Stomach (tissue), 19 donors: ENCODE measurements at regions of chr14 and their contacts with region 1.

Region 1: GRCh38 chr14:69242311-69243224 is 17.4 kb upstream of the GALNT16 start:
- DNase-seq: peak; percentile 69 to 85
- H3K4me3 ChIP-seq: no peak overlapping the region
- H3K27ac ChIP-seq: no peak overlapping the region
- H3K4me1 ChIP-seq: peaks cover 0 to 14% (median 6%) of the 10 kb centered on the region in 4 donors
- H3K27me3 ChIP-seq: no peaks in the 10 kb centered on the region
- CTCF ChIP-seq: peak in 5 of 7 experiments; percentile 56 to 81 (median 73)
- EP300 ChIP-seq: no peak
- POLR2A ChIP-seq: no peak

Region 2: GRCh38 chr14:69038455-69039287 is 203.9 kb before region 1 on chr14:
- intact Hi-C with region 1: no loop called
- DNase-seq: peak in 1 of 2 donors; percentile 69
- H3K4me3 ChIP-seq: no peak overlapping the region
- H3K27ac ChIP-seq: peak overlapping the region in 4 of 5 donors; percentile 29 to 71 (median 54)
- H3K4me1 ChIP-seq: peaks cover 14 to 35% (median 22%) of the 10 kb centered on the region in 4 donors
- H3K27me3 ChIP-seq: no peaks in the 10 kb centered on the region
- CTCF ChIP-seq: no peak
- EP300 ChIP-seq: no peak
- POLR2A ChIP-seq: no peak

Region 3: GRCh38 chr14:69204753-69205152 is 37.8 kb before region 1 on chr14:
- intact Hi-C with region 1: no loop called
- DNase-seq: peak in 1 of 2 donors; percentile 18
- H3K4me3 ChIP-seq: no peak overlapping the region
- H3K27ac ChIP-seq: no peak overlapping the region
- H3K4me1 ChIP-seq: peaks cover 0 to 7% (median 3%) of the 10 kb centered on the region in 4 donors
- H3K27me3 ChIP-seq: no peaks in the 10 kb centered on the region
- CTCF ChIP-seq: no peak
- EP300 ChIP-seq: no peak
- POLR2A ChIP-seq: no peak

Region 4: GRCh38 chr14:69460093-69460701 is 217.6 kb after region 1 on chr14:
- intact Hi-C with region 1: loop called (anchors 5 kb)
- DNase-seq: peak; percentile 65 to 93
- H3K4me3 ChIP-seq: no peak overlapping the region
- H3K27ac ChIP-seq: peak overlapping the region in 1 of 5 donors; percentile 6
- H3K4me1 ChIP-seq: no peaks in the 10 kb centered on the region
- H3K27me3 ChIP-seq: no peaks in the 10 kb centered on the region
- CTCF ChIP-seq: peak in 5 of 7 experiments; percentile 54 to 79 (median 66)
- EP300 ChIP-seq: no peak
- POLR2A ChIP-seq: no peak

Region 5: DNA sequence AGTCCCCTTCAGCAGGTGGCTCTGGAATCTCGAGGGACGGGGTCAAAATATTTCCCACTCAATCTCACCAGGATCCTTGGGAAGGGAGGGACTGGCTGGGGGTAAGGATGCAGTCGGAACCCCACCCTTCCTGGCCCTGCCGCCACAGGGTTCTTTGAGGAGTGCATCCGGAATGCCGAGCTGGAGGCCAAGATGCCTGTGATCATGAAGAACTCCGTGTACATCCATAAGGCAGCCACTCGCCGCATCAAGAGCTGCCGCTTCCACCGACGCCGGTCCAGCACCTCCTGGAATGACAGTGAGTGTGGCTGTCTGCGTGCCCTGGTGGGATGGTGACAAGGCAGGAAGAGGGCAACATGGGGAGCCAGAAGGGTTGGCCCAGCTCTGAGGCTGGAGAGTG is 285.1 kb after region 1 on chr14:
- intact Hi-C with region 1: no loop called
- DNase-seq: no peak
- H3K4me3 ChIP-seq: no peak overlapping the region
- H3K27ac ChIP-seq: no peak overlapping the region
- H3K4me1 ChIP-seq: peaks cover 0 to 6% (median 2%) of the 10 kb centered on the region in 4 donors
- H3K27me3 ChIP-seq: peaks cover 0 to 41% (median 0%) of the 10 kb centered on the region in 3 donors
- CTCF ChIP-seq: no peak
- EP300 ChIP-seq: no peak
- POLR2A ChIP-seq: no peak